T-cell (primary cell): ENCODE measurements at regions of chr11 and their contacts with region 1.

Region 1: GRCh38 chr11:112050721-112051120 is 23.1 kb downstream of the PIH1D2 start:
- DNase-seq: no peak
- ATAC-seq: no peak
- H3K4me3 ChIP-seq: no peak overlapping the region
- H3K4me3 Mint-ChIP-seq: no peak overlapping the region
- H3K27ac ChIP-seq: no peak overlapping the region
- H3K27ac Mint-ChIP-seq: peak overlapping the region in 1 of 2 donors; percentile 0
- H3K4me1 ChIP-seq: no peaks in the 10 kb centered on the region
- H3K4me1 Mint-ChIP-seq: peaks cover 11 to 28% (median 14%) of the 10 kb centered on the region in 3 donors
- H3K27me3 ChIP-seq: no peaks in the 10 kb centered on the region
- H3K27me3 Mint-ChIP-seq: no peaks in the 10 kb centered on the region

Region 2: DNA sequence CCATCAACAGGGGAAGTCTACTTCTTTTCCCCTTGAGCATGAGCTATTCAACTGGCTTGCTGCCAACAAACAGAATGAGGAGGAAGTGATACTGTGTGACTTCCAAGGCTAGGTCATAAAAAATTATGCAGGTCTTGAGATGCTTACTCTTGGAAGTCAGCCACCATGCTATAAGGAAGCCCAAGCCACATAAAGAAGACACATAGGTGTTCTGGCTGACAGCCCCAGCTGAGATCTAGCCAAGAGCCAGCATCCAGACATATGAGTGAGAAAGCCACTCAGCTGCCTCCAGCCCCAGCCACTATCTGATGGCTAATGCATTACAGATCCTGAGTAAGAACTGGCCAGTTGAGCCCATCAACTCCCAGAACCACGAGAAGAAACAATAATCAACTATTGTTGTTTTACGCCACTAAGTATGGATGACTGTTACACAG is 253.6 kb before region 1 on chr11:
- CTCF ChIA-PET with region 1: no interaction called
- POLR2A ChIA-PET with region 1: no interaction called
- DNase-seq: peak in 1 of 35 experiments; percentile 1
- ATAC-seq: no peak
- H3K4me3 ChIP-seq: no peak overlapping the region
- H3K4me3 Mint-ChIP-seq: no peak overlapping the region
- H3K27ac ChIP-seq: no peak overlapping the region
- H3K27ac Mint-ChIP-seq: peak overlapping the region in 1 of 2 donors; percentile 55
- H3K4me1 ChIP-seq: no peaks in the 10 kb centered on the region
- H3K4me1 Mint-ChIP-seq: no peaks in the 10 kb centered on the region
- H3K27me3 ChIP-seq: no peaks in the 10 kb centered on the region
- H3K27me3 Mint-ChIP-seq: no peaks in the 10 kb centered on the region

Region 3: GRCh38 chr11:112024773-112025678 is 25.7 kb before region 1 on chr11 and contains the start of gene DLAT:
- CTCF ChIA-PET with region 1: interaction called in 1 of 2 experiments, 16 read pairs
- POLR2A ChIA-PET with region 1: no interaction called
- DNase-seq: peak; percentile 66 to 88 (median 77)
- ATAC-seq: peak; percentile 89 to 92 (median 90)
- H3K4me3 ChIP-seq: peak within 1 kb of the TSS; percentile 90 to 92
- H3K4me3 Mint-ChIP-seq: peak within 1 kb of the TSS; percentile 99 to 100 (median 99)
- H3K27ac ChIP-seq: peak within 1 kb of the TSS; percentile 73
- H3K27ac Mint-ChIP-seq: peak within 1 kb of the TSS; percentile 98 to 99
- H3K4me1 ChIP-seq: peaks cover 0 to 19% of the 10 kb centered on the region in 2 experiments
- H3K4me1 Mint-ChIP-seq: peaks cover 25 to 35% (median 26%) of the 10 kb centered on the region in 3 donors
- H3K27me3 ChIP-seq: no peaks in the 10 kb centered on the region
- H3K27me3 Mint-ChIP-seq: no peaks in the 10 kb centered on the region
- total RNA-seq, gene DLAT: 13.4 to 19.8 (median 18.7) TPM